ENCODE measurements at regions of chr4 and their contacts with region 1.

Region 1: DNA sequence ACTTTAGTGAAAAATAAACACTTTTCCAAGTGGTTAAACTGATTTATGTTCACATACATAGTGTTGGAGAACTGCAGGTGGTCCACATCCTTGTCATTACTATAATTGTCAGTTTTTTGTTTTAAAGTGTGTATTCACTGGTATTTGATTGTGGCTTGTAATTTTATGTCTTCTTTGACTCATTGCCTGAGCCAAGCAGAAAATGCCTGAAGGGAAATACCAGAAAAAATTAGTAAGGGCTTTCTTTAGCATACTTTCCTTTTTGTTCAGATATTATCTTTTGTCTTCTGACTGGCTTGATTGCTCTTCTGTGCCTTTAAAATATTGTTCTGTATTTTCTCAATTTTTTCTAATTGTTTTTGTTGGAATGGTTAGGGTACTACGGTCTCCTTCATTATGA is 981.3 kb downstream of the C4orf33 start:
- DNase-seq: no peak
- ATAC-seq: no peak
- H3K4me3 ChIP-seq: no peak overlapping the region
- H3K27ac ChIP-seq: no peak overlapping the region
- H3K4me1 ChIP-seq: no peaks in the 10 kb centered on the region
- H3K27me3 ChIP-seq: no peaks in the 10 kb centered on the region
- CTCF ChIP-seq: no peak
- POLR2A ChIP-seq: no peak

Region 2: DNA sequence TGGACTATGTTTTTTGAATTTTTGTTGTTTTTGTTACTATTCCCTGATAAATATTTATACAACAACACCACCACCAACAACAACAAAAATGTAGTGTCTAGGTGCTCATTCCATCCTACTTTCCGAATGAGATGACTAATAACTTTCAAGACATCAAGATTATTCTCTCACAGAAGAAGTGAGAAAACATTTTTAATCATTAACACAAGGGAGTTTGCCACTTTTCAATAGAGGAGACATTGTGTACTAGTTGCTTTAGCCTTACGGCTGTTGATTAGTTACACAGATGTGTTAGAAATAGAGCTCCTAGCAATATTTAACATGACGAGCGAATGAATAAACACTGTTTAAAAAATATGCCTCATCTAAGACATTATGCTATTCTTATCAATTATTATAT is 82.6 kb before region 1 on chr4:
- in situ Hi-C with region 1: loop called in 1 of 4 experiments (anchors 25 kb)
- intact Hi-C with region 1: no loop called
- DNase-seq: no peak
- ATAC-seq: no peak
- H3K4me3 ChIP-seq: no peak overlapping the region
- H3K27ac ChIP-seq: no peak overlapping the region
- H3K4me1 ChIP-seq: no peaks in the 10 kb centered on the region
- H3K27me3 ChIP-seq: no peaks in the 10 kb centered on the region
- CTCF ChIP-seq: no peak
- POLR2A ChIP-seq: no peak

Region 3: DNA sequence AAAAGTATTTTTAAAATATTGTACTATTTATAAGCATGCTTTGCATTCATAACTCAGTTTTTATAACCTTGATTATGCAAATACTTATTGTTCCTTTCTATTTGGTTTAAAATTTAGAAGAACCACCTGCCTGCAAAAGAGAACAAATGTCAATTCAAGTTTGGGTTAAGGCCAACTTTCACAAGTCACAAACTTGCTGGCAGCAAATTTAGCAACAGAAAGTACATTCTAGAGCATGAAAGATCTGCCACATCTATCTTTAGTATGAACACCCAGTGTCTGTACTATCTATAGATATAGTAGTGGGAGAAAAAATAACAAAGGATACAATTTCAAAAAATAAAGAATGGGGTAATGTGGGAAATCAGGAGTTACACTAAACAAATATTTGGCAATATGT is 32.9 kb after region 1 on chr4:
- in situ Hi-C with region 1: no loop called
- intact Hi-C with region 1: no loop called
- DNase-seq: no peak
- ATAC-seq: no peak
- H3K4me3 ChIP-seq: no peak overlapping the region
- H3K27ac ChIP-seq: no peak overlapping the region
- H3K4me1 ChIP-seq: no peaks in the 10 kb centered on the region
- H3K27me3 ChIP-seq: no peaks in the 10 kb centered on the region
- CTCF ChIP-seq: no peak
- POLR2A ChIP-seq: no peak

Region 4: DNA sequence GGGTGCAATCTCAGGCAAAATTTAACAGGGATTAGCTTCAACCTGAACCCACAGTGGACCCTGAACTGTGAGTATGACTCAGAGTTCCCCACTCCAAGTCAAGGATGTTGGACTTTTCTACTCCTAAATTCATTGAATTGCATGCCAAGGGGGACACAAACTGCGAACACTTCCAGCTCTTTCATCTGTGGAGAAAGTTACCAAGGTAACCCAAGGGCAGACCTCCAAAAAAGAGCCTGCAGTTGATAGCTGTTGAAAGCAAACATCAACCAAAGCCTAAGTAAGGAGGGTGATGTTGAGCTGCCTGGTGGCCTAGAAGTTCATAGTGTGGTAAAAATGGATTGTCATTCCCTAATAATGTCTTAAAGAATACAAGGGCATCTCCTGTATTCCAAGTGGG is 261.6 kb after region 1 on chr4:
- in situ Hi-C with region 1: no loop called
- intact Hi-C with region 1: no loop called
- DNase-seq: no peak
- ATAC-seq: no peak
- H3K4me3 ChIP-seq: no peak overlapping the region
- H3K27ac ChIP-seq: no peak overlapping the region
- H3K4me1 ChIP-seq: no peaks in the 10 kb centered on the region
- H3K27me3 ChIP-seq: no peaks in the 10 kb centered on the region
- CTCF ChIP-seq: no peak
- POLR2A ChIP-seq: no peak